ENCODE measurements at regions of chr20 and their contacts with region 1.

Region 1: DNA sequence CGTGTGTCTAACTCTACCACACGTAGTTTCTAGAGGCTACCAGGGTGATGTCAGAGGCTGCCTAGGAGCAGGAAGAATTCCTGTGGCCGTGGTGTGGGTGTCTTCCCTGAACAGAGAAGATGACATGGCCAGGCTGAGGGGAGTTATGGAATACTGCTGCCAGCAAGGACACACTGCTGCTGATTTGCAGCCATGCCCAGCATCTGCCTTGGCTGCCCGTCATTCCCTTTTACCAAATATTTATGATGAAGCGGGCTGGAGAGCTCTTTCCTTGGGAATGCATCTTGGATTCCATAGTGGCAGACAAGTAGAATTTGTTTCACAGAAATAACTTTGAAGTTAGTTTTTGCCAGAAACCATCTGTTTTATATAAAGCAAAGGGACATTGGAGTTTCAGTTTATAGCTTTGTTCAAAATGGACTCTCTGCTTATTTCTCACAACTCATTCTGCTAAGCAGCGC is 80.8 kb upstream of the VSTM2L start:
- DNase-seq: peak; percentile 91
- ATAC-seq: peak; percentile 93
- H3K4me3 ChIP-seq: no peak overlapping the region
- H3K27ac ChIP-seq: peak overlapping the region; percentile 42; the same call in 1 of the 2 replicates
- H3K4me1 ChIP-seq: peaks cover 8% of the 10 kb centered on the region
- H3K27me3 ChIP-seq: no peaks in the 10 kb centered on the region
- CTCF ChIP-seq: no peak
- POLR2A ChIP-seq: no peak
- RAD21 ChIP-seq: peak; percentile 19; the same call in 1 of the 2 replicates

Region 2: GRCh38 chr20:37627060-37627769 is 195.0 kb before region 1 on chr20:
- CTCF ChIA-PET with region 1: no interaction called
- POLR2A ChIA-PET with region 1: no interaction called
- dilution Hi-C with region 1: no loop called
- in situ Hi-C with region 1: no loop called
- intact Hi-C with region 1: no loop called
- DNase-seq: peak; percentile 55
- ATAC-seq: peak; percentile 90
- H3K4me3 ChIP-seq: no peak overlapping the region
- H3K27ac ChIP-seq: no peak overlapping the region
- H3K4me1 ChIP-seq: no peaks in the 10 kb centered on the region
- H3K27me3 ChIP-seq: peaks cover 21% of the 10 kb centered on the region
- CTCF ChIP-seq: no peak
- POLR2A ChIP-seq: no peak
- RAD21 ChIP-seq: no peak

Region 3: DNA sequence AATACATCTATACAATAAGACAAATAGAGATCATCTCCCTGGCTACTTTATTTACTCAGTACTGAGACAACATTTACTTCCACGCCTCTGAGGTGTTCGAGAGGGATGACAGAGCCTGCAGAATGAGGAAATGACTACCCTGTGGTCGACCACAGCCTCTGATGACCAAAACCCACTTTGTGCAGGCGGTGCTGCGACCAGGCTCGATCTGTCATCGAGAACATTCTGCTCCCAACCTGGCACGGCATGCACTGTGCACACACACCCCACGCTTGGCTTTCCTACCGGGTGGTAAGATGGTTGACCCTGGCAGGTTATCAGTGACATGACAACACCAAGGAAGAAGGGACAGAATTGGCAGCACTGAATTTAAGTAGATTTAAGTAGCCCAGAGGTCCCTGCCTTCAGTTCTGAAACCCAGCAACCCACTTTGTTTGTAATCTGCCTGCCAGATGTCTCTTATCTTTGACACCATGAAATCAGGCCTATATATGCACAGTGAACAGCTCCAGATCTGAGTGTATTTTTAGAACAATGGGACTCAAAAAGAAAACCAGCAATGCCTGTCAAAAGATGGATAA is 168.5 kb after region 1 on chr20:
- CTCF ChIA-PET with region 1: interaction called, 3 read pairs
- POLR2A ChIA-PET with region 1: no interaction called
- dilution Hi-C with region 1: no loop called
- in situ Hi-C with region 1: no loop called
- intact Hi-C with region 1: loop called (anchors 10 kb)
- DNase-seq: peak; percentile 78
- ATAC-seq: peak; percentile 36
- H3K4me3 ChIP-seq: no peak overlapping the region
- H3K27ac ChIP-seq: peak overlapping the region; percentile 12; the same call in 1 of the 2 replicates
- H3K4me1 ChIP-seq: peaks cover 29% of the 10 kb centered on the region
- H3K27me3 ChIP-seq: no peaks in the 10 kb centered on the region
- CTCF ChIP-seq: no peak
- POLR2A ChIP-seq: no peak
- RAD21 ChIP-seq: no peak

Region 4: DNA sequence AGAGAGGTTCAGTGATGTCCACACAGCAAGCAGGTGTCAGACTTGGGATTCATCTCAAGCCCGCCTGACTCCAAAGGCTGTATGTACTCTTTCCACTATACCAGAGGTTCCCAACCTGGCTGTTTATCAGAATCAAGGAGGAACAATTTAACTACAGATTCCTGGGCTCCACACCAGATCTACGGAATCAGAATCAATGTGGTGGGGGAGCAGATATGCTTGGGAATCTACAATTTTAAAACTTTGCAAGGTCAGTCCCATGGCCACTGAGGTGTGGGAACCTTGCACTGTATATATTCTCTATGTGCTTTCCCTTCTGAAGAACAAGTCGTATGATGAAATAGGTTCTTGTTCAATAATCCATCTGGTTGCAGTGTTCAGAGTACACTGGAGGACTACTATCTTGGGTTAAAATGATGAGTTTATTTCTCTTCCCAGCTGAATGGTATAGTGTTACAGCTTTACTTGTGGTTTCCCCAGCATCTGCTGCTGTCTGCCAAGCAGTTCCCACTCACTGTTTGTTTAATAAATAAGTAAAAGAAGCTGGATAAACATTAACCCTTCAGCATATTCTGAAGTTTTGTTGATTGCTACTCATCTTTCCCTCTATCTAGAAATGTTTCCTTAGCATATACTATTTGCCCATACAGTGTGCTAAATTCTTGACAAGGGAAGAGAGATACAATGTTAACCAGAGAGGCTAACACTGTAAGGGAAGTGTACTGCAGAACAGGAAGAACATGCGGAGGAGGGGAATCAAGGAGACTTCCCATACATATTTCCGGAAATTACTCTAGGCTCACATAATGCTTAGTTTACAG is 201.2 kb after region 1 on chr20:
- CTCF ChIA-PET with region 1: no interaction called
- POLR2A ChIA-PET with region 1: no interaction called
- dilution Hi-C with region 1: no loop called
- in situ Hi-C with region 1: no loop called
- intact Hi-C with region 1: loop called (anchors 10 kb)
- DNase-seq: peak; percentile 96
- ATAC-seq: peak; percentile 97
- H3K4me3 ChIP-seq: no peak overlapping the region
- H3K27ac ChIP-seq: peak overlapping the region; percentile 91; the same call in 1 of the 2 replicates
- H3K4me1 ChIP-seq: peaks cover 17% of the 10 kb centered on the region
- H3K27me3 ChIP-seq: no peaks in the 10 kb centered on the region
- CTCF ChIP-seq: no peak
- POLR2A ChIP-seq: no peak
- RAD21 ChIP-seq: no peak